GM12878 (cell line): ENCODE measurements at regions of chr2 and their contacts with region 1.

Region 1: DNA sequence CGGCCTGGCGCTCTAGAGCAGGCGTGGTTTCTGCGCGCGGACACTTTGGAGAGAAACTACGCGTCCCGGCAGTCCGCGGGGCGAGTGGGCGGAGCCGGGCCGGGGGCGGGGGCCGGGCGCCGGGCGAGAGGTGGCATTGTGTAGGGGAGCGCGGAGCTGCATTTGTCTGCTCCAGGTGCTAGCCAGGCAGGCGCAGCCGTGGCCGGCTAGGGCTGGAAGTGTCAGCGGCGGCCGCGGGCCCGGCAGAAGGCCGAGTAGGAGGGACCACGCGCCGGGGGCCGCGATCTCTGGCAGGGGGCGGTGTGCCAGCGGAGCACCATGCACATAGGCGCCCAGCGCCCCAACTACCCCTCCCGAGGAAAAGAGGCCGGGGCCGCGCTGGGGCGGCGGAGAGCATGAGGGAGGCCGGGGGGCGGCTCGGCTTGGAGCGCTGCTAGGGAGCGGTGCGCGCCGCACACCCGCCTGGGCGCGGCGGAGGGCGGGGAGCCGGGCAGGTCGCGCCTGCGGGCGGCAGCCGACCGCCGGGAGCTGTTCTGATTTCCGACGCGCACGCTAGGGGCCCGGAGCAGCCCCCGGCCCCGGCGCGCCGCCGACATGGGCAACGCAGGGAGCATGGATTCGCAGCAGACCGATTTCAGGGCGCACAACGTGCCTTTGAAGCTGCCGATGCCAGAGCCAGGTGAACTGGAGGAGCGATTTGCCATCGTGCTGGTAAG is at the start of gene FMNL2:
- DNase-seq: peak; percentile 24
- ATAC-seq: peak; percentile 90
- H3K4me3 ChIP-seq: peak within 1 kb of the TSS; percentile 76
- H3K27ac ChIP-seq: peak within 1 kb of the TSS; percentile 35; the same call in 1 of the 2 replicates
- H3K4me1 ChIP-seq: no peaks in the 10 kb centered on the region
- H3K27me3 ChIP-seq: no peaks in the 10 kb centered on the region
- CTCF ChIP-seq: 0 out of 6 replicates have a peak, but pooled peaks of 1 of the 3 experiments have one; percentile 5
- EP300 ChIP-seq: no peak
- POLR2A ChIP-seq: 0 out of 2 replicates have a peak, but pooled peaks have one; percentile 67
- RAD21 ChIP-seq: no peak
- polyA plus RNA-seq, gene FMNL2: 0.13 to 0.19 TPM

Region 2: DNA sequence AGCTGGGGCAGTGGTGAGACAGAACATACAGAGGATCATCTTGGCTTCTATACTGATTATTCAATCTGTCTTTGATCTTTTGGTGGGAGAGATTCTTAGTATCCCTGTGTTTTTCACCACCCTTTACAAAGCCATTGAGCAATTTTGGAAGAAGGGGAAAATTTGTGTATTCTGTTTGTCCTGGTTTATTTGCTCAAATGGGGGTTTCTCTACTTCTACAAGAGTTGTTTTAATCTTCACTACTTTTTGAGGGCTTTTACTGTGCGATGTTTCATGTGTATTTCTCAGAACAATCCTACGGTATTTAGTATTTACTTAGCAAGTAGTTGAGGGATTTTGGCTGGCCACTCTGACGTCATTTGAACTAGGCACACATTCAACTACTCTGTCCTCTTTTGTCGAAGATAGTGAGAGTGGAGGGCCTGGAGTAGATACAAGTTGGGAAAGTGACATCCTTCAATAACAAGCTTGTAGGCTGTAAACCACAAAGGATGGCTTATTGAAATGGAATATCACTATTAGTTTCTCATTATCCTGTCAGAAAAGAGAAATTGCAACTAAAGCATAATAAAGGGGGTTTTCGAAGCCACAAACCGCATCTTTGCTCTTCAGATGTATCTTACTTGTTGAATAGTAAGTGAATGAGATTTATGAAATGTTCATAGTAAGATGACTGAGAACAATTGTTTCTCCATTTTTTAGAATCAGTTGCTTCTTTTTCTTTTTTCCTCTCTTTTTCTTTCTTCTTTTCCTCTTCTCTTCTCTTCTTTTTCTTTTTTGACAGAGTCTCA is 24.6 kb after region 1 on chr2:
- CTCF ChIA-PET with region 1: interaction called, 4 read pairs
- POLR2A ChIA-PET with region 1: no interaction called
- RAD21 ChIA-PET with region 1: interaction called, 5 read pairs
- SMC1A ChIA-PET with region 1: interaction called, 15 read pairs
- in situ Hi-C with region 1: no loop called
- intact Hi-C with region 1: no loop called
- DNase-seq: no peak
- ATAC-seq: no peak
- H3K4me3 ChIP-seq: no peak overlapping the region
- H3K27ac ChIP-seq: no peak overlapping the region
- H3K4me1 ChIP-seq: no peaks in the 10 kb centered on the region
- H3K27me3 ChIP-seq: no peaks in the 10 kb centered on the region
- CTCF ChIP-seq: no peak
- EP300 ChIP-seq: no peak
- POLR2A ChIP-seq: no peak
- RAD21 ChIP-seq: no peak

Region 3: DNA sequence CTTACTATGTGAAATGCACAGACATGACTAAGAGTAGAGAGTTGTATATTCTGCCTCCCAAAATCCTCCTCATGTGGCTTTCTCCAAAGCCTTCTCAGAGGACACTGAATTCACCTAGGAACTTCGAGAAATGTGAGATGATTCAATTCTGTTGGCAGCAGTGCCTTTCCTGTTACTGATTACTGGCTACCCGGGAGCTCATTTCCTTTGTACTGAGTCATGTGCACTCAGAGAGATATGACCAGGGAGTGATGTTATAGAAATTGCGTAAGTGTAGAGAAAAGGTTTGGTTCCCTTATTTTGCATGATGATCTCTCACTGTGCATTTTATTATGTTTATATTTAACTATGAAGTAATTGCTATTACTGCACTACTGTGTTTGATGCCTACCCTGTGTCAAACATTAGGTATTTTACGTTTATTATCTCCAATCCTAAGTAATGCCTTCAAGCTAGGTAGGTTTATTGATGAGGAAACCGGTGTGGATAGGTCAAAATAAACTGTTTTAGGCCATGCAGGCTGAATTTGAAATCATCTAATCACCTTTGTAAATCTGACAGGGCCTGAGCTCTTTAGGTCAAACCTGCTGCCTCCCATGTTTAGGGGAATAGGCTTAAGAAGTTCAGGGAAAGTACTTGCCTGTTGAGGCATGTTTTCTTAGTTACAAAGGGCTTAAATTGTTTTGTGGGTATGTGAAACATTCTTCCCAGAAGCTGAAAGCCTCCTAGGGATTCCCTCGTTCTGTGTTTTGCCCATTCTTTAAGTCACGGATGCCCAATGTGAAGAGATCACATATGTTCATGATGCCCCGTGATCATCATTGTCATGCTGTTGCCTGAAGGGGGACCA is 86.6 kb after region 1 on chr2:
- CTCF ChIA-PET with region 1: no interaction called
- POLR2A ChIA-PET with region 1: no interaction called
- RAD21 ChIA-PET with region 1: interaction called, 6 read pairs
- SMC1A ChIA-PET with region 1: interaction called, 4 read pairs
- in situ Hi-C with region 1: no loop called
- intact Hi-C with region 1: loop called (anchors 5 kb)
- DNase-seq: no peak
- ATAC-seq: peak; percentile 86
- H3K4me3 ChIP-seq: no peak overlapping the region
- H3K27ac ChIP-seq: no peak overlapping the region
- H3K4me1 ChIP-seq: no peaks in the 10 kb centered on the region; the same call in 1 of the 2 replicates
- H3K27me3 ChIP-seq: no peaks in the 10 kb centered on the region
- CTCF ChIP-seq: no peak
- EP300 ChIP-seq: 0 out of 4 replicates have a peak, but pooled peaks of 1 of the 2 experiments have one; percentile 22
- POLR2A ChIP-seq: no peak
- RAD21 ChIP-seq: no peak

Region 4: DNA sequence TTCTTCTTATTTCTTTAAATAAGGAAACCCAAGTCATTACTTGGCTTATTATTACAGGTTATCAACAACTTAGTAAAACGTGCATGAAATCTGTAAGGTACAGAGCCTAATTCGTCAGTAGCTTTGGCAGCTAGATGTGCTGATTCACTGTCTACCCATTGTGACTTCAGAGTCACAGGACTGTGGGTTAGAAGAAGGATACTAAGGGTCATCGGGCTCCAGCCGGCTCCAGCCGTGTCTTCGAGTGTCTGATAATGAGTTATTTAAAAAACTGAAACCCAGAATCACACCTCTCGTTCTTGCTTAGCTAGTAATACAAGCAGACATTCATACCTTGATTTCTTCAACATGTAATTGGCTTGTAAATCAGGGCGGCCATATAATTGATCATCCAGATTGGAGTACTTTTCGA is 170.3 kb after region 1 on chr2:
- CTCF ChIA-PET with region 1: no interaction called
- POLR2A ChIA-PET with region 1: no interaction called
- RAD21 ChIA-PET with region 1: interaction called, 11 read pairs
- SMC1A ChIA-PET with region 1: interaction called, 10 read pairs
- in situ Hi-C with region 1: no loop called
- intact Hi-C with region 1: no loop called
- DNase-seq: peak; percentile 35
- ATAC-seq: peak; percentile 89
- H3K4me3 ChIP-seq: no peak overlapping the region
- H3K27ac ChIP-seq: peak overlapping the region; percentile 29; the same call in 1 of the 2 replicates
- H3K4me1 ChIP-seq: peaks cover 11% of the 10 kb centered on the region; the same call in 1 of the 2 replicates
- H3K27me3 ChIP-seq: no peaks in the 10 kb centered on the region; a peak in 1 of 4 replicates
- CTCF ChIP-seq: no peak
- EP300 ChIP-seq: peak in 1 of 2 experiments; percentile 46; a peak in 1 of 4 replicates
- POLR2A ChIP-seq: no peak
- RAD21 ChIP-seq: no peak

Region 5: DNA sequence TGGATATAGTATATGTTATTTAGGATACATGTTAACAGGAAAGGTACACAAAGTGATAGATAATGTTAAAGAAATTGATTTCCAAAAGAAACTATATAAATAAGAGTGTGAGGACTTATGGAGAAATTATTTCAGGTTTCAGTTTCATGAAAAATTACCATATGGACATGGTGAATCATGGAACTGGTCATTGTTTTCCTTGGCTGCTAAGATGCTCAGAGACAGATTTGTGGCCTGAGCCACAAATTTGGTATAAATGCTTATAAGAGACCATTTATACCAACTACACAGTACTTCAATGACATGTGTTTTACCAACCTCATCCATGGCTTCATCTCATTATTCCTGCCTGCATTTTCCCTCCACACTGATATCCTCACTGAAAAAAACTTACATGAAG is 187.9 kb after region 1 on chr2:
- CTCF ChIA-PET with region 1: no interaction called
- POLR2A ChIA-PET with region 1: no interaction called
- RAD21 ChIA-PET with region 1: no interaction called
- SMC1A ChIA-PET with region 1: no interaction called
- in situ Hi-C with region 1: no loop called
- intact Hi-C with region 1: no loop called
- DNase-seq: no peak
- ATAC-seq: no peak
- H3K4me3 ChIP-seq: no peak overlapping the region
- H3K27ac ChIP-seq: no peak overlapping the region
- H3K4me1 ChIP-seq: no peaks in the 10 kb centered on the region
- H3K27me3 ChIP-seq: no peaks in the 10 kb centered on the region
- CTCF ChIP-seq: no peak
- EP300 ChIP-seq: no peak
- POLR2A ChIP-seq: no peak
- RAD21 ChIP-seq: no peak

Region 6: DNA sequence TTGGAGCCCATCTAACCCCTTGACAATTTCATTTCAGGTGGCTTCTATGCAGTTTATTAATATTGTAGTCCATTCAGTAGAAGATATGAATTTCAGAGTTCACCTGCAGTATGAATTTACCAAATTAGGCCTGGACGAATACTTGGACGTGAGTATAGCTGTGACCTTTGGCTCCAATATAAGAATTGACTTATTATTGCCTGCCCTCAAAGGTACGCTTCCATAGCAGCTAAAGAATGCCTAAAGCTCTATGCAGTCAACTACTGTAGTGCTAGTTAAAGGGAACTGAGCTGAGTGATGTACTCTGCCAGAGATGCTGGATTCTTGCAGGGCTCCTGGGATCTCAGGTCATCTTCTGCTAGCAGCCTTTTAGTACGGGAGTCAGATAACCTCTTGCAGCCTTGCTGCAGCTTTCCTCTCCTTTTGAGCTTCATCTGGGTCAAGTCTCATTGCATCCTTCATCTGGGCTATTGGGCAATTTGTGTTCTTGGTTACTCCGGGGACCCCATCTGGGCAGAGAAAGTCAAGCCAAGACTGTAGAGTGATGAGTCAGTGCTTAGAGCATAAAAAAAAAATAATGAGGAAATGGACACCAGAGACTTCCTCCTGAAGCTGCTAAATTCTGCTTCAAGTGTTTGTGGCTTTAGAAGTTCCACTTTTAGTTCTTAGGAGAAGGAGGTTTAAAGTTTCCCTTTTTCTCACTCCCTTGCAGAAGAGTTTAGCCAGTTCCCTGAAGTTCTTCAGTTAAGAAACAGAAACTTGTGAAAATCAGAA is 276.5 kb after region 1 on chr2:
- CTCF ChIA-PET with region 1: interaction called, 4 read pairs
- POLR2A ChIA-PET with region 1: interaction called, 4 read pairs
- RAD21 ChIA-PET with region 1: interaction called, 4 read pairs
- SMC1A ChIA-PET with region 1: interaction called, 5 read pairs
- in situ Hi-C with region 1: no loop called
- intact Hi-C with region 1: loop called (anchors 5 kb)
- DNase-seq: peak; percentile 64
- ATAC-seq: peak; percentile 88
- H3K4me3 ChIP-seq: peak overlapping the region; percentile 49; the same call in 1 of the 2 replicates
- H3K27ac ChIP-seq: peak overlapping the region; percentile 64
- H3K4me1 ChIP-seq: peaks cover 20% of the 10 kb centered on the region
- H3K27me3 ChIP-seq: no peaks in the 10 kb centered on the region
- CTCF ChIP-seq: no peak
- EP300 ChIP-seq: peak in 1 of 2 experiments; percentile 71; a peak in 2 of 4 replicates
- POLR2A ChIP-seq: no peak
- RAD21 ChIP-seq: no peak